ENCODE measurements at regions of chr14 and their contacts with region 1.

Region 1: GRCh38 chr14:71339650-71340415 is 432.6 kb downstream of the PCNX1 start:
- DNase-seq: no peak
- ATAC-seq: no peak
- H3K4me3 ChIP-seq: no peak overlapping the region
- H3K27ac ChIP-seq: peak overlapping the region in 1 of 10 donors; percentile 79
- H3K4me1 ChIP-seq: peaks cover 0 to 29% (median 0%) of the 10 kb centered on the region in 9 donors
- H3K27me3 ChIP-seq: no peaks in the 10 kb centered on the region
- CTCF ChIP-seq: no peak

Region 2: DNA sequence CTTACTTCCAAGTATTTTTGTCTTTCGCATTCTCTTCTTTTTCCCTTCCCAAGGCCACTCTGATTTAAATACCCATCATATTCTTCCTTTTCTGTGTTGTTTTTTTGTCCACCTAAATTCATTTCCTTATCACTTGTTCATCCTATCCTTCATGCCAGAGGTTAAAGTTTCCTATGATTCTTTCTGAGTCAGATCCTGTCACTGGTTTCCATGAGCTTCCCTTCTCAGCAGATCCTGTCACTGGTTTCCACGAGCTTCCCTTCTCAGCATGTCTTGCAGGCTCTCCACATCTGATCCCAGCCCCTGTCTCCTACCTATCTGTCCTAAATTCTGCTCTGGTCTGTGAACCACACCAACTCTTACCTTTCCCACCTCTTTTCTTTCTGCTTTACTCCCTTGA is 280.6 kb after region 1 on chr14:
- intact Hi-C with region 1: no loop called
- DNase-seq: no peak
- ATAC-seq: no peak
- H3K4me3 ChIP-seq: no peak overlapping the region
- H3K27ac ChIP-seq: no peak overlapping the region
- H3K4me1 ChIP-seq: no peaks in the 10 kb centered on the region
- H3K27me3 ChIP-seq: no peaks in the 10 kb centered on the region
- CTCF ChIP-seq: no peak

Region 3: DNA sequence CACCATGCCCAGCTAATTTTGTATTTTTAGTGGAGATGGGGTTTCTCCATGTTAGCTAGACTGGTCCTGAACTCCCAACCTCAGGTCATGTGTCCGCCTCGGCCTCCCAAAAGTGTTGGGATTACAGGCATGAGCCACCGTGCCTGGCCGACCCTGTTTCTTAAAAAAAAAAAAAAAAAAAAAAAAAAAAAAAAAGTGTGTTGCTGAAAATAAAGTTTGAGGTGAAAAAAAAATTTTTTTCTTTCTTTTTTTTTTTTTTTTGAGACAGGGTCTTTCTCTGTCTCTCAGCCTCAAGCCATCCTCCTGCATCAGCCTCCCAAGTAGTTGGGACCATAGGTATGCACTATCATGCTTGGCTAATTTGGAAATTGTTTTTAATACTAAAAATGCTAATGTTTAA is 1729.8 kb after region 1 on chr14:
- intact Hi-C with region 1: loop called in 1 of 10 experiments (anchors 5 kb)
- DNase-seq: no peak
- ATAC-seq: no peak
- H3K4me3 ChIP-seq: no peak overlapping the region
- H3K27ac ChIP-seq: no peak overlapping the region
- H3K4me1 ChIP-seq: peaks cover 0 to 17% (median 9%) of the 10 kb centered on the region in 9 donors
- H3K27me3 ChIP-seq: no peaks in the 10 kb centered on the region
- CTCF ChIP-seq: no peak

Measured in heart right ventricle (tissue), 16 donors.